ENCODE measurements at regions of chr10 and their contacts with region 1.

Region 1: DNA sequence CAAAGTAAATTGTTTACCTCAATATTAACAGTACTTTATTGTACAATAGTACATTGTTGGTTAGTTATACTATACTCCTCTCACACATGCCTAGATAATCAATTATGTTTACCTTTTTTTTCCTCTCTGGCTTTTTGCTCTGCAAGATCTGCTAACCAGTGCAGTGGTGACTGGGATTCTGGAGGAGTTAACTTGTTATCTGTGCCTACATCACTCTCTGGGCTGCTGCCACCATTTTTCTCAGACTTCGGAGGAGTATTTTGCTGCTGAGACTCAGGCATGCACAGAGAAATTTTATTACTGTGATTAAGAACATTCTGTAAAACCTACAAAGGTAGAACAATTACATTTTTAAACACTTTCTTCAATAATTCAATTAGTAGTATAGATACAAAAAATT is 59.7 kb downstream of the NRBF2 start:
- DNase-seq: peak; percentile 53
- H3K4me3 ChIP-seq: no peak overlapping the region
- H3K27ac ChIP-seq: no peak overlapping the region
- H3K4me1 ChIP-seq: peaks cover 13% of the 10 kb centered on the region
- H3K27me3 ChIP-seq: no peaks in the 10 kb centered on the region

Region 2: DNA sequence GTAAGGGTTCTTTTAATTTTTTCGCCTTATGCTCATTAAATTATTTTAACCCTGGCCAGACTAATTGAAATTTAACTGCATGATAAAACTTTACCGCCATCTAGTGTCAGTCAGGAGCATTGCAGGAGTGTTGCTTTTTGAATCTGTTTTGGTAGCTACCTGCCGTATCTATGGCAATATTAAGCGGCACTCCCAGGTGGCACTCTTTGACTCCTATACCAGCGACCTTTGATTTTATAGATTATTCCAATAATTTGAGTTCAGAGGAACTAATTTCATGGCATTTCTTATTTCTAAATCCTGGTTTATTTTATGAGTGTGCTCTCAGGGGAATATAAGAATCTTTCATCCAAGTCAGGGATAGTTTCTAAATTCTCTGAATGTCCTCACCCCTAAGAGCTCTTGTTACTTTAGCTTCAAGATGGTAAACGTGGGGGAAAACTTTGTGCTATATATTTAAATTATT is 527.3 kb after region 1 on chr10:
- in situ Hi-C with region 1: loop called (anchors 10 kb)
- DNase-seq: peak; percentile 37
- H3K4me3 ChIP-seq: no peak overlapping the region
- H3K27ac ChIP-seq: no peak overlapping the region
- H3K4me1 ChIP-seq: peaks cover 15% of the 10 kb centered on the region; the same call in 1 of the 2 replicates
- H3K27me3 ChIP-seq: no peaks in the 10 kb centered on the region